PC-3 (cell line): ENCODE measurements at regions of chr11 and their contacts with region 1.

Region 1: DNA sequence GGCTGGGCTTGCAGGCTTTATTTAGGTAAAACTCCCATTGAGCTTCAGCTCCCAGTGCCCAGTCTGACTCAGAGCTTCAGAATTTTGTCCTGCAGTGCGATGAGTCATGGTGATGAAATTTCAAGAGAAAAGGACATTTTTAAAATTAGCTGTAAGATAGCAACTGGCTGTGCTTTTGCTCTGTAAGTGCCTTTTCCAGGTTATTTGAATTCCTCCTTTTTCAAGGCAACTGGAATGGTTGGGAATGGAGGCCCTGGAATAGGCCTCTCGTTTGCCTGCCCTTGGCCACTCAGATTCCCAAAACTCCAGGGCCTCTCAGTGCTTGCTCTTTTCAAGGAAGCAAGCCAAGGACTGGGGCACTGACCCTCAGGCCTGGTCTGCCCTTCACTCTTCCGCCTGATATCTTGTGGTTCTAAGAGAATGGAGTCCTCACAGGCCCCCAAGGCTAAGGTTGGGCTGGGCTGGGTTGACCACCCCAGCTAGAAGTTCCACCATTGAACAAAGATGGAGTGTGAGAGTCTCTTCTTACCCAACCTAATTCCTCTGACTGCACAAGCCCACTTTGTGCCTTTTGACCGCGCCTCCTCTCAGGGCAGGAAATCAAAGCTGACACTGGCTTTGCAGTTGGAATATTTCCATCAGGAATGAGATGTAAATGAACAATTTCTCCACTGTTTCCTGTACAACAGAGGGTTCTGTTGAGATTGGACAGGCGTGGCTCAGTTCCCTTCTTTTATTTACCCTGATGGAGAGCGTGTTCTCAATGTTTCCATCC is 59.4 kb upstream of the PRSS23 start:
- DNase-seq: peak; percentile 92
- ATAC-seq: peak; percentile 44
- H3K4me3 ChIP-seq: peak overlapping the region; percentile 37
- H3K27ac ChIP-seq: peak overlapping the region; percentile 100
- H3K4me1 ChIP-seq: peaks cover 90% of the 10 kb centered on the region
- H3K27me3 ChIP-seq: no peaks in the 10 kb centered on the region
- CTCF ChIP-seq: no peak

Region 2: GRCh38 chr11:86608251-86608799 is 132.6 kb before region 1 on chr11:
- CTCF ChIA-PET with region 1: no interaction called
- POLR2A ChIA-PET with region 1: no interaction called
- intact Hi-C with region 1: loop called (anchors 5 kb)
- DNase-seq: peak; percentile 82
- ATAC-seq: peak; percentile 39; the same call in 1 of the 2 replicates
- H3K4me3 ChIP-seq: no peak overlapping the region
- H3K27ac ChIP-seq: peak overlapping the region; percentile 85
- H3K4me1 ChIP-seq: peaks cover 35% of the 10 kb centered on the region
- H3K27me3 ChIP-seq: no peaks in the 10 kb centered on the region
- CTCF ChIP-seq: peak; percentile 96

Region 3: GRCh38 chr11:86664930-86665329 is 76.0 kb before region 1 on chr11:
- CTCF ChIA-PET with region 1: no interaction called
- POLR2A ChIA-PET with region 1: no interaction called
- intact Hi-C with region 1: no loop called
- DNase-seq: peak; percentile 35
- ATAC-seq: peak; percentile 54; the same call in 1 of the 2 replicates
- H3K4me3 ChIP-seq: no peak overlapping the region
- H3K27ac ChIP-seq: peak overlapping the region; percentile 18; the same call in 1 of the 2 replicates
- H3K4me1 ChIP-seq: peaks cover 10% of the 10 kb centered on the region
- H3K27me3 ChIP-seq: no peaks in the 10 kb centered on the region
- CTCF ChIP-seq: no peak

Region 4: DNA sequence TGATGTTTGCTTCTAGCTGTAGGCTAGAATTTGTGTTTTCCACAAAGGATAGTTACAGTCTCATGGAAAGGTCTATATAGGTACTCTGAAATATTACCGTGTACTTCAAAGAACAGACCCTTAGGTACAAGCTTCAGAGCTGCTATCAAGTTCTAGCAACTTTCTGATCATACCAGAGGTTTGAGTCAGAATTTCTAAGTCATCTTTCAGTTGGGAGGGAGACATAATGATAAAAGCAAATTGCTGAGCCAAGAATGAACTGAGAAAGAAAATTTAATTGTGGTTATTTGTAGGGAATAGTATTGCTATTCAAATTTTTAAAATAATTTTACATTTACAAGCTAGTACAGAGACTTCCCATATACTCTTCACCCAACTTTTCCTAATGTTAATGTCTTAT is 48.6 kb before region 1 on chr11:
- CTCF ChIA-PET with region 1: no interaction called
- POLR2A ChIA-PET with region 1: no interaction called
- intact Hi-C with region 1: loop called (anchors 5 kb)
- DNase-seq: peak; percentile 14
- ATAC-seq: no peak
- H3K4me3 ChIP-seq: no peak overlapping the region
- H3K27ac ChIP-seq: no peak overlapping the region
- H3K4me1 ChIP-seq: peaks cover 42% of the 10 kb centered on the region
- H3K27me3 ChIP-seq: no peaks in the 10 kb centered on the region
- CTCF ChIP-seq: no peak

Region 5: GRCh38 chr11:86802601-86803051 is 61.7 kb after region 1 on chr11:
- CTCF ChIA-PET with region 1: interaction called, 3 read pairs
- POLR2A ChIA-PET with region 1: interaction called, 7 read pairs
- intact Hi-C with region 1: loop called (anchors 1 kb)
- DNase-seq: peak; percentile 78
- ATAC-seq: peak; percentile 43
- H3K4me3 ChIP-seq: peak overlapping the region; percentile 97
- H3K27ac ChIP-seq: peak overlapping the region; percentile 66
- H3K4me1 ChIP-seq: peaks cover 50% of the 10 kb centered on the region
- H3K27me3 ChIP-seq: no peaks in the 10 kb centered on the region
- CTCF ChIP-seq: peak; percentile 54; the same call in 1 of the 2 replicates